ENCODE measurements at regions of chr6 and their contacts with region 1.

Region 1: GRCh38 chr6:150417899-150418826 is 49.4 kb downstream of the IYD start:
- DNase-seq: peak; percentile 6
- H3K4me3 Mint-ChIP-seq: peak overlapping the region; percentile 73
- H3K27ac Mint-ChIP-seq: peak overlapping the region; percentile 45
- H3K4me1 Mint-ChIP-seq: peaks cover 23% of the 10 kb centered on the region
- H3K27me3 Mint-ChIP-seq: peaks cover 36% of the 10 kb centered on the region

Region 2: DNA sequence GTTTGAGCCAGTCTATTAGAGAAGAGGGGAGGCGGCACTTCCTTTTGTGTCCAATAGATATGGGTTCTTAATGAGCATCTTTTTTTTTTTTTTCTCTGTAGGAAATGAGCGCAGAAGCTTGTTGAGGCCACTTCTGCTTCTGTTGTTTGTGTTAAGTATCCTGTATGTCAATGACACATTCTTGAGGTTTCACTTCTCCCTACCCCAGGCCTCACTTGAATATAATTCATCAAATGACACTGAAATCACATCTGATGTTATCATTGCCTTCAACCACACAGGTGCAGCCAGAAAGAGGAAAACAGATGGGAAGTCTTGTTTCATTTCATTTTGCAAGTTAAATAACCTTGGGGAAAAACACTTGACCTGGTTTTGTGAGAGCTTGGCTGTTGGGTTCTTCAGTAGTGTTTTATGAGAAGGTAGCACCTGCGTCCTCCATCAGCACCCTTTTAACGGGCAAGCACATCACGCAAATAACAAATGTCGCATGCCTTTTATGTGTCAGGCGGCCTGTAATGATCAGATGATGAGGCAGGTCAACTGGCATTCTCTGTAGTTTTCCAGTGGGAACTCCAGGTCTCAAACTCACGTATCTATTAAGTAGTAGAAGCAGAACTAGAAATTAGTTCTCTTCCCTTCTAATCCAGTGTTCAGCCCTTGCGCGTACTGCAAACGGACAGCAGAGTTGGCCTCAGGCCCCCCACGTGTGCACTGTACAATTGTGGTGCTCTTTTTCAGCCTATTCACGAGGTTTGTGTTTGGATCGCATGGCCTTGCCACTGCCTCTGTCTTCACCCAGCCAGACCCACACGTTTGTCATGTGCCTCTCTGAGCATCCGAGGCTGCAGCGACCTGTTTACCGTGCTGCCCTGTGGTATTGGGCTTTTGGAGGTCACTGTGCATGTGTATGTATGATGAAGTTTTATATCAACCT is 205.0 kb after region 1 on chr6:
- intact Hi-C with region 1: no loop called
- DNase-seq: no peak
- H3K4me3 Mint-ChIP-seq: no peak overlapping the region
- H3K27ac Mint-ChIP-seq: no peak overlapping the region
- H3K4me1 Mint-ChIP-seq: peaks cover 6% of the 10 kb centered on the region
- H3K27me3 Mint-ChIP-seq: peaks cover 16% of the 10 kb centered on the region

Region 3: DNA sequence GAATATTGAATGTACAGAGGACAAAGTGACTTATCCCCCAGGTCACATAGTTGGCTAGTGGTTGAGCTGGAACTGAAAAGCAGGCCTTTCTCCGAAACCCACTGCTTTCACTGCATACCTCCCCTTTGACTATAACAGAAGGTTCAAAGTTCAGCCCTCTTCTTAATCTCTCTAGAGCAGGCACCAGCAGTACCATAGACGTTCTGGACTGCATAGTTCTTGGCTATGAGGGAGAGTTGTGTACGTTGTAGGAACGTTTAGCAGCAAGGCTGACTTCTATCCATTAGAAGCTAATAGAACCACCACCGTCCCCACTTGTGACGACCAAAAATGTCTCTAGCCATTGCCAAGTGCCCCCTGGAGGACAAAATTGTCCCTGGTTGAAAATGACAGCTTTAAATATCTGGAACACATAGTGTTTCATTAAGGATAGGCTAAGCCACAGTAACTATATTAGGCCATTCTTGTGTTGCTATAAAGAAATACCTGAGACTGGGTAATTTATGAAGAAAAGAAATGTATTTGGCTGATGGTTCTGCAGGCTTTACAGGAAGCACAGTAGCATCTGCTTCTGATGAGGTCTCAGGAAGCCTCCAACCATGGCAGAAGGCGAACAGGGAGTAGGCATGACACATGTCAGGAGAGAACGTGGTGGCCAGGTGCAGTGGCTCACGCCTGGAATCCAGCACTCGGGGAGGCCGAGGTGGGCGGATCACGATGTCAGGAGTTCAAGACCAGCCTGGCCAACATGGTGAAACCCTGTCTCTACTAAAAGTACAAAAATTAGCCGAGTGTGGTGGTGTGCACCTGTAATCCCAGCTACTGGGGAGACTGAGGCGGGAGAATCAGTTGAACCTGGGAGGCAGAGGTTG is 323.7 kb after region 1 on chr6:
- intact Hi-C with region 1: loop called (anchors 2 kb)
- DNase-seq: no peak
- H3K4me3 Mint-ChIP-seq: no peak overlapping the region
- H3K27ac Mint-ChIP-seq: no peak overlapping the region
- H3K4me1 Mint-ChIP-seq: no peaks in the 10 kb centered on the region
- H3K27me3 Mint-ChIP-seq: no peaks in the 10 kb centered on the region